Endothelial cell of umbilical vein (primary cell): ENCODE measurements at regions of chr19 and their contacts with region 1.

Region 1: GRCh38 chr19:46487802-46488445 is 7.7 kb downstream of the PNMA8B start:
- DNase-seq: peak; percentile 58
- H3K4me3 ChIP-seq: no peak overlapping the region
- H3K27ac ChIP-seq: no peak overlapping the region
- H3K4me1 ChIP-seq: peaks cover 6% of the 10 kb centered on the region
- H3K27me3 ChIP-seq: peaks cover 49% of the 10 kb centered on the region in 2 experiments
- CTCF ChIP-seq: peak; percentile 85 to 88
- POLR2A ChIP-seq: no peak

Region 2: DNA sequence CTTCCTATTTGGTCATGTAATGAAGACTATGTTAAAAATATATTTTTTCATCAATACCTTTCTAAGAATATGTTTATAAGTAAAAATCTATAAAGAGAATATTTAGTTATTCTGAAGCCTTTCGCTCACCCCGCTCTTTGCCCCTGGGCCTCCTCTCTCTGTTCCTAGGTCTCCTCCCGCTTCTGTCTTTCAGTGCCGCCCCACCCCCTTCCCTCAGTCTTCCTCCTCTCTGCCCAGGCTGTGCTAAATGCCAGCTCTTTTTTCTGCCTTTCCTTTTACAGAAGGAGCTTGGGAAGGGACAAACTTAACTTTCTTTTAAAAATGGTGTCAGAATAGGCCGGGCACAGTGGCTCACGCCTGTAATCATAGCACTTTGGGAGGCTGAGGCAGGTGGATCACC is 168.3 kb before region 1 on chr19:
- CTCF ChIA-PET with region 1: no interaction called
- POLR2A ChIA-PET with region 1: no interaction called
- dilution Hi-C with region 1: no loop called
- intact Hi-C with region 1: no loop called
- DNase-seq: no peak
- H3K4me3 ChIP-seq: no peak overlapping the region
- H3K27ac ChIP-seq: no peak overlapping the region
- H3K4me1 ChIP-seq: no peaks in the 10 kb centered on the region
- H3K27me3 ChIP-seq: no peaks in the 10 kb centered on the region
- CTCF ChIP-seq: no peak
- POLR2A ChIP-seq: no peak

Region 3: GRCh38 chr19:46392243-46392801 is 95.6 kb before region 1 on chr19:
- CTCF ChIA-PET with region 1: interaction called, 61 read pairs
- POLR2A ChIA-PET with region 1: no interaction called
- dilution Hi-C with region 1: no loop called
- intact Hi-C with region 1: loop called (anchors 1 kb)
- DNase-seq: no peak
- H3K4me3 ChIP-seq: no peak overlapping the region
- H3K27ac ChIP-seq: no peak overlapping the region
- H3K4me1 ChIP-seq: no peaks in the 10 kb centered on the region
- H3K27me3 ChIP-seq: no peaks in the 10 kb centered on the region
- CTCF ChIP-seq: no peak
- POLR2A ChIP-seq: no peak

Region 4: DNA sequence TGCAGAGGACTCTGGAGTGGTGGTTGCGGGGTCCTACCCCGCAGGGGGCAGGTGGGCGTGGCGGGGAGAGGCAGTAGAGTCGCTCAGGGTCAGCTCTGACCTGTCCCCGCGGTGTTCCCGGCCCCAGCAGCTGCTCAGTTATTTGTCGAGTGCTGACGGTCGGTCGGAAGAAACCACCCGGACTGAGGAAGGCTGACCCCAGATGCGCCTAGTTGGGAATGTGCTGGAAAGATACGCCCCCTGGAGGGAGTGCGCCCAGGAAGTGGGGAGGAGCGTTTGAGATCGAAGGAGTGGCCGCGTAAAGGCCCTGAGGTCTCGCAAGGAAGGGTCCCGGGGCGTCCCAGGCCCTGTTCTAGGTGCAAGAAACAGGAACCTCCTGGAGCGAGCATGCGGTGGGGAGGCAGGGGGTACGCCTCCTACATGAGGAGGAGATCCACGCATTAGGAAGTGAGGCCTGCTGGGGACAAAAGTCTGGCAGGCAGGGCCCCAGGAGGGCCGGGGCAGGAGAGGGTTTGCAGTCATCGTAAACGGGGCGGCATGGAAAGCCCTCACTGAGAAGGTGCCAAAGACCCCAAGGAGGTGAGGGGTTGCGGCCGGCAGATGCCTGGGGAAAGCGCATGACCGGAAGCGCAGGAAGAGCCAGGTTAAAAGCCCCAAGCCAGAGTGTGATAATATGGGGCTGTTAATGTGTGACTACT is 83.7 kb before region 1 on chr19:
- CTCF ChIA-PET with region 1: interaction called, 94 read pairs
- POLR2A ChIA-PET with region 1: no interaction called
- dilution Hi-C with region 1: no loop called
- intact Hi-C with region 1: loop called (anchors 1 kb)
- DNase-seq: no peak
- H3K4me3 ChIP-seq: no peak overlapping the region
- H3K27ac ChIP-seq: no peak overlapping the region
- H3K4me1 ChIP-seq: no peaks in the 10 kb centered on the region
- H3K27me3 ChIP-seq: peaks cover 30 to 31% of the 10 kb centered on the region in 2 experiments
- CTCF ChIP-seq: no peak
- POLR2A ChIP-seq: no peak

Region 5: DNA sequence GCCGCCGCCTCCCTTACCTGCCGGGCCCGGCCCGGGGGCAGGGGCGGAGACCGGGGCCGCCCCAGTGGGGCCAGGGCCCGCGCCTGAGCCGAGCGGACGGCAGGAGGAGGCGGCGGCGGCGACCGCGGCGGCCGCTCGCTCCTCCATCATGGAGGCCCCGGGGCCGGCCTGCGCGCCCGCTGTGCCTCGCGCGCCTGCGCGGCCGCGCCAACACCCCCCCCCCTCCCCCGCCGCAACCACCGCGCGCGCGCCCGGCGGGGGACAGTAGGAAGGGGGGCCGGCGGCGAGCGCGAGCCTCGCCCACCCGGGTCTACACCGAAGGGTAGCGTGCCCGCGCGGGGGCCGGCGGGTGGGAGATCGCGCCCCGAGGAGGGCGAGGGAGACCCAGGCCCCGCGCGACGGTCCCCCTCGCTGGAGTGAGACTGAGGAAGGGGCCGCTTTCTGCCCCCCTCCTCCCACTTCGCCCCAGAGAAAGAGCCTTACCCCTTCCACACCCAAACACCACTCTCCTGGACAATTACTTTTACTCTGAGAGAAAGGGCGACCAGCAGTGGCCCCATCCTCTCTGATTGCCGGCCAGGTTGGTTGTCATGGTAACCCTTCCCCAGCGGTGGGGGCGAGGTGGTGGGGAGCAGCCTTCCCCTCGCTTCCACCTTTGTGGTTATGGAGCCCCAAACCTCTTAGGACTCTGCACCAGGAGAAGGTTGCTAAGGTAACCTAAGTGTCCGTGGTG is 258.5 kb after region 1 on chr19 and contains the start of gene STRN4:
- CTCF ChIA-PET with region 1: no interaction called
- POLR2A ChIA-PET with region 1: no interaction called
- dilution Hi-C with region 1: no loop called
- intact Hi-C with region 1: no loop called
- DNase-seq: no peak
- H3K4me3 ChIP-seq: peak within 1 kb of the TSS; percentile 80 to 86 (median 85)
- H3K27ac ChIP-seq: peak within 1 kb of the TSS; percentile 54
- H3K4me1 ChIP-seq: peaks cover 13% of the 10 kb centered on the region
- H3K27me3 ChIP-seq: no peaks in the 10 kb centered on the region
- CTCF ChIP-seq: no peak
- POLR2A ChIP-seq: peak; percentile 28
- total RNA-seq, gene STRN4: 108 and 116 TPM in 2 replicates